AG04450 (cell line): ENCODE measurements at regions of chr15 and their contacts with region 1.

Region 1: DNA sequence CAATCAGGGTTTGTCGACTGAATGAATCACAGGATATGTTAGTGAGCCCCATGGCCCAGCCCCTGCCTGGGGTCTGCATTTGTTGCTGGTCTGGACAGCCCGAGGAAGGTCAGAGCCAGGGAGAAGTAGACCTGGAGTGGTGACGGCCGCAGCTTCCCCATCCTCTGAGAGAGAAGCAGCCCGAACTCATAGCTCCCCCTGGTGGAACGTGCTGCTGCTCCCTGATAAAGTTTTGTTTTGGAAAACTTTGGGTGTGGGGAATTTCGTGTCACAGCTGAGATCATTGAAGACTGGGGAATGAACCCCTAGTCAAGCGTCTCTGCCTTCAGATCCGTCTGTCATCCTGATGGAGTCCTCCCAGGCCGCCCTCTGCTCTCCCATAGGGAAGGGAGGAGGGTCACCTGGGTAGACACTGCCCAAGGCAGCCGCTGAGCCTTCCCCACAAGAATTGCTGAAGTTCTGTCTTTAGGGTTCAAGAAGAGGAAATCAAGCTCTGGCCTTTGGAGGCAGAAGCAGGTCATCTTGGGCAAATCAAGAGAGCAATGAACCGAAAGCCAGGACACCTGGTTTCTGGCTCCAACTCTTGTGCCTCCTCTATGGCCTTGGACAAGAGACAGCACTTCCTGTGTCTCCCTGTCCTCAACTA is 60.5 kb downstream of the GLDN start:
- DNase-seq: no peak
- H3K4me3 ChIP-seq: no peak overlapping the region
- H3K27ac ChIP-seq: no peak overlapping the region
- H3K27me3 ChIP-seq: peaks cover 38% of the 10 kb centered on the region
- CTCF ChIP-seq: peak; percentile 80

Region 2: GRCh38 chr15:51172193-51172592 is 229.8 kb before region 1 on chr15:
- CTCF ChIA-PET with region 1: interaction called, 17 read pairs
- POLR2A ChIA-PET with region 1: no interaction called
- DNase-seq: peak; percentile 8
- H3K4me3 ChIP-seq: no peak overlapping the region
- H3K27ac ChIP-seq: no peak overlapping the region
- H3K27me3 ChIP-seq: no peaks in the 10 kb centered on the region
- CTCF ChIP-seq: no peak

Region 3: GRCh38 chr15:51227940-51228783 is 173.8 kb before region 1 on chr15:
- CTCF ChIA-PET with region 1: interaction called, 67 read pairs
- POLR2A ChIA-PET with region 1: no interaction called
- DNase-seq: peak; percentile 27
- H3K4me3 ChIP-seq: no peak overlapping the region
- H3K27ac ChIP-seq: no peak overlapping the region
- H3K27me3 ChIP-seq: peaks cover 2% of the 10 kb centered on the region
- CTCF ChIP-seq: 0 out of 2 replicates have a peak, but pooled peaks have one; percentile 4

Region 4: DNA sequence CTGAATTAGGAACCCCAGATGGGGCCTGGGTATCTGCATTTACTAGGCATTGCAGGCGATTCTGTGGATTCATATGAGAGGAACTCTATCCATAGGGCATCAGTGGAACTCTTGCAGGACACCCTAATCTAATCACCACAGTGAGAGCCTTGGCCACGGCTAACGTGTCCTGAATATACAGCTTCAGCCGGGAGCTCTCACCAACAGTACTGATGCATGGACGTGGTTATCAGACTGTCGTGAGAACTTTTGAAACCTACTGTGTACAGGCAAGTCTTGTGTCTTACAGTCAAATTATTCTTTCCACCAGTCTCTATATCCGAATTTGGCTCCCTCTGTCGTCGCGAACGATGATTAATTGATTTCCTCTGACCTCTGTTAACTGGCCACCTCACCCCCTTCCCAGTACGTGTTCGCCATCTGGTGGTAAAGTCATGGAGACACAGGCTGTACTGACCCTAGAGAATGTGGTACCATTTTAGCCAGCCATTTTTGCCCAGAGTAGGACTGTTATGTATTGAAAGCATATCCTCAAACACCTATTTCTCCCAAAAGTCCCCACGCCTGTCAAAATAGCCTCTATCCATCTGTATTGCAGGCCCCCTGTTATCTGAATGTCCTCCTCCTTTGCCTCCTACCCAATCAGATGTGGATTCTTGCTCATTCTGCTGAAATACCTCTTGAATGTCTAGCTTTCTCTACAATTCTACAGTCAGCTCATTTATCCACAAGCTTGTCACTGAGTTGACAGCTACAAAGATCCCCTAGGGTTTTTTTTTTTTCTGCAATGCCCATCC is 20.8 kb before region 1 on chr15:
- CTCF ChIA-PET with region 1: interaction called, 28 read pairs
- POLR2A ChIA-PET with region 1: no interaction called
- DNase-seq: peak; percentile 11
- H3K4me3 ChIP-seq: no peak overlapping the region
- H3K27ac ChIP-seq: no peak overlapping the region
- H3K27me3 ChIP-seq: peaks cover 18% of the 10 kb centered on the region
- CTCF ChIP-seq: peak; percentile 96

Region 5: DNA sequence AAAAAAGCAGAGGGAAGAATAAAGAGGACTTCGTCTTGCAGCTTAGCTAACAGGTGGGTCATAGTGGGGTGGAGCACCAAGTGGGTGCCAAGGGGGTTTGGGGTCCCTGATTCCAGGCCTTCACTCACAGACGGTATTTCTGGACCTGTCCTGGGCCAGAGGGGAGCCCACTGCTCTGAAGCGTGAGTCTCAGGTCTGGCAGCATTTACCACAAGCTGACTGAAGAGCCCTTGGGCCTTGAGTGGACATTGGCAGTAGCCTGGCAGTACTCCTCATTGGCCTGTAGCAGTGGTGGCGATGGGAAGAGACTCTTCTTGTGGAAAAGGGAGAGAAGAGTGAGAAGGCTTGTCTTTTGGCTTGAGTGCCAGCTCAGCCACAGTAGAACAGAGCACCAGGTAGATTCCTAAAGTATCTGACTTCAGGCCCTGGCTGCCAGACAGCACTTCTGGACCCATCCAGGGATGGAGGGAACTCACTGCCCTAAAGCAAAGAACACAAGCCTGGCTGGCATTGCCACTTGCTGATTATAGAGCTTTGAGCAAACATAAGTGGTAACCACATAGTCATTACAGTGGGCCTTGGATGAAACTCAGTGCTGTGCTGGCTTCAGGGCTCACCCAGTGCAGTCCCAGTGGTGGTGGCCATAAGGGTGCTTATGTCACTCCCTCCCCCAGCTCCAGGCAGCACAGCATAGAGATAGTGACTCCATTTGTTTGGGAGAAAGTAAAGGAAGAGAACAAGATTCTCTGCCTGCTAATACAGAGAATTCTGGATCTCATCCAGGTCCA is 12.5 kb after region 1 on chr15:
- CTCF ChIA-PET with region 1: interaction called, 38 read pairs
- POLR2A ChIA-PET with region 1: no interaction called
- DNase-seq: no peak
- H3K4me3 ChIP-seq: no peak overlapping the region
- H3K27ac ChIP-seq: no peak overlapping the region
- H3K27me3 ChIP-seq: peaks cover 10% of the 10 kb centered on the region
- CTCF ChIP-seq: no peak